ENCODE measurements at regions of chr11 and their contacts with region 1.

Region 1: DNA sequence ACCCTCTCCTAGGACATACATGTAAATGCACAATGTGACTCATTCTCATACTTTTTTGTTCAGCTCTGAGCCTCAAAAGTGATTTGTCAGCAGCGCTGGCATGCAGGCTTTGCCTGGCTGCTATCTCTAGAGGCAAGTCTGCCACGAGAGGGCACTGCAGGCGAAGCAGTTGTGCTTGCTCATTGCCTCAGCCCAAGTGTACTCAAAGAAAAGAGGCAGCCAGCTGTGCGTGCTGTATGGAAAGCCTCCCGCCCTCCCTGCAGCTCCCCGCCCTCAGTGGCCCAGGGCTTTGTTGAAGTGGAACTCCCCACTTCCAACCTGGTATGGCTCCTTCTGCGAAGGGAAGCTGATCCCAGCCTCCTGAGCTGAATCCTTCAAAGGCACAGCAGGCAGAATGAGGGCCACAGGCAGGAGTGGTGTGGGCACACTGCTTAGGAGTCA is 16.3 kb downstream of the SDHAF2 start:
- DNase-seq: peak; percentile 87
- H3K27ac ChIP-seq: peak overlapping the region; percentile 57
- CTCF ChIP-seq: peak; percentile 89

Region 2: DNA sequence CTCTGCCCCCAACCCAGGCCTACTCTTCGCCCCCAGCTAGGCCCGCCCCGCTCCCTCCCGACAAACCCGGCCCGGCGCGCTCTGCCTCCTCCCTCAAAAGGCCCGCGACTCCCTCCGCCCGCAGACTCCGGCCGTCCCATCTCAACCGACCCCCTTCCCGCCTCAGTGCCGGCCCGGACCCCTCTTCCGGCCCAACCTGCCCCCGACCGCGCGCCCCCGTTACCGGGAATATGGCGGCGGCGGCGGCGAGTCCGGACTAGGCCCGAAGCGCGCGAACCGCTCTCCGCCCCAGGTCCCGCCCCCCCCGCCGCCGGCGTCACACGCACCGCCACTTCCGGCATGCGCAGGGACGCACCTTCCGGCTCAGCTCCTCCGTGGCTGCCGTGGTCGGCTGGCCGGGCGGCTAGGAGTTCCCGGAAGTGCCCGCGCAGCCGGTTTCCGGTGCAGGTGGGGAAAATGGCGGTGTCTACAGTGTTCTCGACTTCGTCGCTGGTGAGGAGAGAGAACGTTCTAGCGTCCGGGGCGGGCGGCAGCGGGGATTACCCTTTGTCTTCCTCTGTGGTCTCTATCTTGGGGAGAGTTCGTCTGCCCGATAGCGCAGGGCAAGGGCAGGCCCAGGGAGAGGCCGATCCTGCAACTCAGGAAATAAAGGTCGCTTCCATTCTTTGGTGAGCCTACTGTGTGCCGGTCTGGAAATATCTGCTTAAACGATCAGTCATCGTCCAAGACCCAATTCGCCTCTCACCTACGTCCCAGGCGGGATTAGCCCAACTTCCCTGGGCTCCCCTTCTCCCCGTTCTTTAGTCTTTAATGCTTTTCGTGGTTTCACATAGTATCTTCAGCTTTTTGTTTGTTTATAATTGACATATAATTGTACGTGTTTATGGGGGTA is 16.3 kb before region 1 on chr11 and contains the starts of genes CPSF7 and SDHAF2:
- CTCF ChIA-PET with region 1: interaction called, 25 read pairs
- POLR2A ChIA-PET with region 1: no interaction called
- DNase-seq: peak; percentile 93
- H3K27ac ChIP-seq: peak within 1 kb of the TSS; percentile 94
- CTCF ChIP-seq: no peak

Region 3: DNA sequence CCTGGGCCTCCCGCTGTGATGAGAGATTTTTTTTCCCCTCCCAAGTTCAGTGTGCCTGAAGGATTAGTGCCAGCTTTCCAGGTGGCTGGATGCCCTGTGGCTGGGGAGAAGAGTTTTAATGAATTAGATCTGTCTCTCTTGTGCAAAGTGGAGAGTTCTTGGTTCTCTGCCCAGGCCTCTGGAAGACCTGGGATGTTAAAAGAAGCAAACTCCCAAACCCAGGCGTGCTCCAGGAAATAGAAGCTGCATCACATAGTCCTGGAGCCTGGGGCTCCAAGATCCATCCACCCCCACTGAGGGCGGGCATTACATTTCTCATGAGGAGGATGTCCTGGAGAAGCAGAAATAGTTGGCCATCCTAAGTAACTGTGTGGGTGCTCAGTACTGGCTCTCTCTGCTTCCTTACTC is 14.2 kb after region 1 on chr11:
- CTCF ChIA-PET with region 1: interaction called, 12 read pairs
- POLR2A ChIA-PET with region 1: no interaction called
- DNase-seq: no peak
- H3K27ac ChIP-seq: peak overlapping the region; percentile 19
- CTCF ChIP-seq: no peak

Region 4: GRCh38 chr11:61627567-61628445 is 181.6 kb after region 1 on chr11:
- CTCF ChIA-PET with region 1: interaction called, 16 read pairs
- POLR2A ChIA-PET with region 1: no interaction called
- DNase-seq: peak; percentile 71
- H3K27ac ChIP-seq: peak overlapping the region; percentile 56; the same call in 1 of the 2 replicates
- CTCF ChIP-seq: peak; percentile 80

Region 5: DNA sequence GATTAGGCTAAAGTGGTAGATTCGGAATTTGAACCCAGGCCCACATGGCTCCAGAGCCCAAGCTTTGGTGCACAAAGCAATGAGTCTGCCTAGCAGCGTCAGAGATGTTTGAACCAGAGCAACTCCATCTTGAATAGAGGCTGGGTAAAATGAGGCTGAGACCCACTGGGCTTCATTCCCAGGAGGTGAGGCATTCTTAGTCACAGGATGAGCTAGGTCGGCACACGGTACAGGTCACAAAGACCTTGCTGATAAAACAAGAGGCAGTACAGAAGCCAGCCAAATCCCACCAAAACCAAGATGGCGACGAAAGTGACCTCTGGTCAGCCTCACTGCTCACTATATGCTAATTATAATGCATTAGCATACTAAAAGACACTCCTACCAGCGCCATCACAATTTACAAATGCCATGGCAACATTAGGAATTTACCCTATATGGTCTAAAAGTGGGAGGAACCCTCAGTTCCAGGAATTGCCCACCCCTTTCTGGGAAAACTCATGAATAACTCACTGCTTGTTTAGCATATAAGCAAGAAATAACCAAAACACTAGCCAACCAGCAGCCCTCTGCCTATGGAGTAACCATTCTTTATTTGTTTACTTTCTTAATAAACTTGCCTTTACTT is 193.7 kb after region 1 on chr11:
- CTCF ChIA-PET with region 1: interaction called, 13 read pairs
- POLR2A ChIA-PET with region 1: no interaction called
- DNase-seq: no peak
- H3K27ac ChIP-seq: no peak overlapping the region
- CTCF ChIP-seq: no peak